AG04449 (cell line): ENCODE measurements at regions of chr9 and their contacts with region 1.

Region 1: GRCh38 chr9:114681594-114682332 is at the start of gene TEX48:
- DNase-seq: no peak
- H3K4me3 ChIP-seq: no peak within 1 kb of the TSS
- CTCF ChIP-seq: peak; percentile 74

Region 2: DNA sequence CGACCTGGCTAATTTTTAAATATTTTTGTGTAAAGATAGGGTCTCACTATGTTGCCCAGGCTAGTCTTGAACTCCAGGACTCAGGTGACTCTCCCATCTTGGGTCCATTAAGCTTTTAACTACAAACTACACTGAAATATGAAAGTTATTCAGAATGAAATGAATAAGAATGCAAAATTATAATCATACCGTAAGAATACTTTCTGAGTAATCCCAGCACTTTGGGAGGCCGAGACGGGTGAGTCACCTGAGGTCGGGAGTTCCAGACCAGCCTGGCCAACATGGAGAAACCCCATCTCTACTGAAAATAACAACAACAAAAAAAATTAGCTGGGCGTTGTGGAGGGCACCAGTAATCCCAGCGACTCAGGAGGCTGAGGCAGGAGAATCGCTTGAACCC is 360.0 kb before region 1 on chr9:
- CTCF ChIA-PET with region 1: no interaction called
- POLR2A ChIA-PET with region 1: no interaction called
- DNase-seq: no peak
- H3K4me3 ChIP-seq: no peak overlapping the region
- CTCF ChIP-seq: no peak

Region 3: DNA sequence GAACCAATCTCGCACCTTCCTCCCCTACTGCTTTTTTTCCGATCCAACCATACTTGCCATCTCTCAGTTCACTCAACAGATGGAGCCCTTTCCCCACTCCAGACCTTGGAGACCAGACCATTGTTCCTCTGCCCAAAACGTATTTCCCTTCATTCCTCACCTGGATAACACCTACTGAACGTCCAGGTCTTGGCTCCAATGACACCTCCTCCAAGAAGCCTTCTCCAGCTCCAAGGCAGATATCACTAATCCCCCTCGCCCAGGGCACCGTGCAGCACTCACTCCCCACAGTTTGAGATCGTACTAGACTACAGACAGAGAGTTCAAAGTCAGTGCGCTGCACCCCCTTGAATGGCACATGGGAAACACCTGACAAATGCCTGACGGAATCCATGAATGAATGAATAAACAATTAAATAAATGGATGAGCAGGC is 246.9 kb before region 1 on chr9:
- CTCF ChIA-PET with region 1: interaction called, 11 read pairs
- POLR2A ChIA-PET with region 1: no interaction called
- DNase-seq: no peak
- H3K4me3 ChIP-seq: no peak overlapping the region
- CTCF ChIP-seq: peak; percentile 66

Region 4: GRCh38 chr9:114633438-114634089 is 48.2 kb before region 1 on chr9:
- CTCF ChIA-PET with region 1: no interaction called
- POLR2A ChIA-PET with region 1: no interaction called
- DNase-seq: no peak
- H3K4me3 ChIP-seq: no peak overlapping the region
- CTCF ChIP-seq: no peak

Region 5: GRCh38 chr9:114706711-114707110 is 24.9 kb after region 1 on chr9:
- CTCF ChIA-PET with region 1: interaction called, 13 read pairs
- POLR2A ChIA-PET with region 1: no interaction called
- DNase-seq: no peak
- H3K4me3 ChIP-seq: no peak overlapping the region
- CTCF ChIP-seq: no peak

Region 6: GRCh38 chr9:114738581-114739316 is 57.0 kb after region 1 on chr9:
- CTCF ChIA-PET with region 1: interaction called, 80 read pairs
- POLR2A ChIA-PET with region 1: no interaction called
- DNase-seq: no peak
- H3K4me3 ChIP-seq: no peak overlapping the region
- CTCF ChIP-seq: peak; percentile 63